ENCODE measurements at regions of chr9 and their contacts with region 1.

Region 1: DNA sequence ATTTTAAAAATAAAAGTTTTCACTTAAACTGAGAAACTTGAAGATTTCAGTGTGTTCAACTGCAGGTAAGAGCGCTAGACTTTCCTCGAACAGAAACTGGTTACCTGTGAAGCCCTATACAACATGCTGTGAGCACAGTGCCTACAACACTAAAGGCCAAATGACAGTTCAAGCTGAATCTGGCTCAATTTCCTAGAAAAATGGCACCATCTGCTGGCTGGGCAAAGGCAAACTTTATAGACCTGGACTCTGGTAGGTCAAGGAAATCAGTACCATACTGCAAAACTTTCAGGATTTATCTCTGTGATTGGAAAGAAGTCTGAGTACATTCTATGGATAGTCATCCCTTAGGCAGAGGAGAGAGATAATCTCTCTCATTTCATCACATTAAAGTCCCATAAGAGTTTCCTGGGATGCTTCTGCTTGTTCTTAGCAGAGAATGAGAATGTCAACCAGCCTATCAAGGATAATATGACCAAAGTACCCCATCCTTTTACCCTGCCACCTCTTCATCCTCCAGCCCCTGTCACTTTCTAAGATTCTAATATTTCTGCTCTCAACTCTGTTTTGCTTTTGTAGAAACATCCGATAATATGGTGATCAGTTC is 31.8 kb upstream of the FOXB2 start:
- DNase-seq: peak; percentile 7
- H3K4me3 ChIP-seq: no peak overlapping the region
- CTCF ChIP-seq: peak; percentile 63

Region 2: GRCh38 chr9:76756268-76756640 is 231.4 kb before region 1 on chr9:
- CTCF ChIA-PET with region 1: interaction called, 20 read pairs
- POLR2A ChIA-PET with region 1: no interaction called
- DNase-seq: no peak
- H3K4me3 ChIP-seq: no peak overlapping the region
- CTCF ChIP-seq: peak; percentile 22

Region 3: DNA sequence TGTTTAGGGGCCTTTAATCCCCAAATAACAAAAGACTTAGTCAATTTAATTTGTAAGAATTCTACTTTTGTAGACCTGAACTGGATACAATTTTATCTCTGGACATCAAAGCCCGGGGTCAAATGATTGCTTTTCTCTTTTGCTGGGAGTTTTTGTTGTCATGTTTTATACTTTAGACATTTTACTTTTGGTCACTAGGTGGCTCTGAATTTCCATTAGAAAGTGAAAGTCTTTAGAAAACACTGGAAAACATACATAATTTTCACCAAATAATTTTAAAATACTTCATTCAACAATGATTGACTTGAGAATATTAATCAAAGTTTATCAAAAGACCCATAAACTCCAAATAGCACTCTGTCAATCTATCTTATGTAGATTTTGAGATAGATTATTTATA is 226.2 kb before region 1 on chr9:
- CTCF ChIA-PET with region 1: interaction called, 20 read pairs
- POLR2A ChIA-PET with region 1: no interaction called
- DNase-seq: no peak
- H3K4me3 ChIP-seq: no peak overlapping the region
- CTCF ChIP-seq: peak; percentile 11

Region 4: GRCh38 chr9:76817489-76817888 is 170.2 kb before region 1 on chr9:
- CTCF ChIA-PET with region 1: interaction called, 298 read pairs
- POLR2A ChIA-PET with region 1: no interaction called
- DNase-seq: no peak
- H3K4me3 ChIP-seq: no peak overlapping the region
- CTCF ChIP-seq: no peak

Measured in AG04449 (cell line).